Activated CD4-positive, alpha-beta T cell treated with anti-CD3 and anti-CD28 coated beads, Interleukin-2, amount 10 ng/mL, durations not matched to agents 24 days and 14 days (primary cell): ENCODE measurements at regions of chr5 and their contacts with region 1.

Region 1: DNA sequence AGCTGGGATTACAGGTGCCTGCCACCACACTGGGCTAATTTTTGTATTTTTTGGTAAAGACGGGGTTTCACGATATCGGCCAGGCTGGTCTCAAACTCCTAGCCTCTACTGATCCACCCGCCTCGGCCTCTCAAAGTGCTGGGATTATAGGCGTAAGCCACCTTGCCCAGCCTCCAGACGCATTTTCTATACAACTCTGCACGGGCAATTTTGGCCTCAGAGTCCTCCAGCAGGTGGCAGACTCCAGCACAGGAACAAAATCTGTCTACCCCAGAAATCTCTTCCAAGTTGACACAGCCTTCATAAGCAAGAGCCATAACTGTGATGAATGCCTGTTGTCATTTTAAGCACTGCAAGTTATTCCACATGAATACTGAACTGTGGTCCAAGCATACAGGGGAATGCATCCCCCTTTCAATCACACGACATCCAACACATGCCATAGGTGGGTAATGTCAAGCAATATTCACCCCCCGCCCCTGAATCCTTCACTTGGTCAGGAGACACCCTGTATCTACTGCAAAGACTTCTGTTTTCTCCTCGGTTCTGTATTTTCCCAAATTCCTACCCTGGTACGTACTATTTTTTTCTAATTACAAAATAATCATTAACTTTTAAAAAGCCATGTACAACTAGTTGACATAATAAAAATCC is 50.8 kb downstream of the ALDH7A1 start:
- DNase-seq: peak; percentile 74
- H3K4me3 Mint-ChIP-seq: no peak overlapping the region
- H3K27ac Mint-ChIP-seq: no peak overlapping the region
- H3K4me1 Mint-ChIP-seq: no peaks in the 10 kb centered on the region
- H3K27me3 Mint-ChIP-seq: peaks cover 2% of the 10 kb centered on the region

Region 2: DNA sequence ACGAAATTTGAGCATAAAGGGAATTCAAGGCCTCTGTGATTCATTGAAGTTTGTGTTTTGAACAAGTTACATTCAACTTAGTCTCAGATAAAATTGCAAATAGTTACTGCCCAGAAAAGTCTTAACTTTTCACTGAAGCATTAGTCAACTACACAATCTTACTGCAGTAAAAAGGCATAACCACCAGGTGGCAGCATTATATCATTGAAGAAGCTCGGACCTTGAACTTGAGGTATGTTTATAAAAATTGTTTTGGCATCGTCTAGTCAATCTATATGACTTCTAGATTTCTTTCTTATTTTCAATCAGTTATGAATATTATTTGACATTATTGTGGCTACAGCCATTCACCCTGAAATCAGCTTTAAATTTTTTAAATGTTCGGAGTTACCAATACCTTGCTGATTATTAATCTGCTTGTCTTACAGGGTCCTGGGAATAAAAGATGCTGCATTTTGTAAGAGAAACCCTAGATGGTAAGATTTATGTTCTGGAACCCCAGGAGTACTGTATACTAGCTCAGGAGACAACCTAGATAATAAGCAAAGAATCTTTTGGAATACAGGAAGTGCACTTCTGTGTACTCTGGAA is 204.9 kb before region 1 on chr5:
- intact Hi-C with region 1: loop called (anchors 1 kb)
- DNase-seq: peak; percentile 86
- H3K4me3 Mint-ChIP-seq: no peak overlapping the region
- H3K27ac Mint-ChIP-seq: no peak overlapping the region
- H3K4me1 Mint-ChIP-seq: no peaks in the 10 kb centered on the region
- H3K27me3 Mint-ChIP-seq: peaks cover 16% of the 10 kb centered on the region

Region 3: DNA sequence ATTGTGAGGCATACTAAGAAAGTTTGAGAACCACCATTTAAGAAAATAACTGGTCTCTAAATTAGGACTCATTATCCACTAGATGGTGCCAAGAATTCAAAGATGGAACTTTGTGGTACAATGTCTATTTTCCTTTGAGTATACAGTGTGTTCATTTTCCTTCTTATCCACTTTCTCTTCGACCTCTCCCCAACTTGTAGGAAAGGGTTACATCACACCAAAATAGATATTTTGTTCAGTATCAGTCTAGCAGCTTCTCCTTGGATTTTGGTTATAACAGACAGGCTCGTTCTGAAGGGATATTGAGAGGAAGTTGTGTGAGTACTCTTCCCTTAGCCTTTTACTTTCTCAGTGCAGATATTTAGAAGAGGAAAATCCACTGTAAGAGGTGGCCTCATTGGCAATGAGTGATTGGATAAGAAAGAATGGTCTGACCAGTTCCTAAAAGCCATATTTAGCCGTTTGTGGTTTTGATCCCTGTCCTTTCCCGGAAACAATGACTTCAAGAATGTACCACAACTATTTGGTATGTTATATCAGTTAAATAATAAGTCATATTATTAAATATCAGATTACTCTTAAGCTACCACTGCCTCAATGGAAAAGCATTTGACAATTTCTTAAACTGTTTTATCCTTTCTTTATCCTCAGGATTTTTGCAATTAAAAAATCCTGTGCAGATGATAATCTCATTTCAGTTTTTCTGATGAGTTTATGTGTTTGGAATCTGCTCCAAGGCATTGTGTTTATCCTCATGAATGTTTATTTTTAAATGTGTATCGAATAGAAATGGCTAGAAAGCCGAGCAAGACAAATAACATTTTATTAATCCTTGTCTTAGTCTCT is 190.0 kb before region 1 on chr5:
- intact Hi-C with region 1: loop called (anchors 1 kb)
- DNase-seq: no peak
- H3K4me3 Mint-ChIP-seq: no peak overlapping the region
- H3K27ac Mint-ChIP-seq: no peak overlapping the region
- H3K4me1 Mint-ChIP-seq: peaks cover 7% of the 10 kb centered on the region
- H3K27me3 Mint-ChIP-seq: peaks cover 3% of the 10 kb centered on the region